Left cardiac atrium (tissue), 4 donors: ENCODE measurements at regions of chr1 and their contacts with region 1.

Region 1: GRCh38 chr1:46132529-46133180 is at the start of gene PIK3R3:
- DNase-seq: peak; percentile 98
- ATAC-seq: peak; percentile 98 to 99
- total RNA-seq, gene PIK3R3: 34.9 to 50.9 TPM

Region 2: GRCh38 chr1:46008585-46008984 is 124.1 kb before region 1 on chr1:
- intact Hi-C with region 1: no loop called
- DNase-seq: no peak
- ATAC-seq: peak; percentile 45 to 66

Region 3: GRCh38 chr1:46043458-46044017 is 89.1 kb before region 1 on chr1:
- intact Hi-C with region 1: loop called in 1 of 2 experiments (anchors 10 kb)
- DNase-seq: no peak
- ATAC-seq: no peak

Region 4: GRCh38 chr1:46070164-46070814 is 62.4 kb before region 1 on chr1:
- intact Hi-C with region 1: loop called in 1 of 2 experiments (anchors 10 kb)
- DNase-seq: no peak
- ATAC-seq: peak; percentile 63 to 78

Region 5: DNA sequence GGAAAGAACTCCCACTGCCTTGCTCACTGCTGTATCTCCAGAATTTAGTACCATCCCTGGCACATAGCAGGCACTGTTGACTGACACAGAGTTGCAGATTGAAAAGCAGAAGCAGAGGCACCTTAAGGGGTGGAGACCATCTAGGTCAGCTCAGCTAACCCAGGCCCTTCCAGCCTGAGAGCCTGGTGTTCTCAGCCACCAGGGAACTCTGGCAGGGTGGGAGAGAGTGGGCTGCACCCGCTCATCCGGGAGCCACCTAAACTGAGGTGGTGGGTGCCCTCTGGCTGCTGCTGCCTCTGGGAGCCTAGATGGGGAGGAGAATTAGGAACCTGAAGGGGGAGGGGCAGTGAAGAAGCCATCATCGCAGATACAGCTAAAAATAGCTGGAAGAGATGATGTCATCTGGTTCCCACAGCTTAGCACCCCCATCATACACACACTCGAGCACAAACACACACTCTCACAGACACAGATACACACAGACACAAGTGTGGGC is 40.8 kb after region 1 on chr1:
- intact Hi-C with region 1: loop called (anchors 5 kb)
- DNase-seq: no peak
- ATAC-seq: peak; percentile 45 to 49

Region 6: DNA sequence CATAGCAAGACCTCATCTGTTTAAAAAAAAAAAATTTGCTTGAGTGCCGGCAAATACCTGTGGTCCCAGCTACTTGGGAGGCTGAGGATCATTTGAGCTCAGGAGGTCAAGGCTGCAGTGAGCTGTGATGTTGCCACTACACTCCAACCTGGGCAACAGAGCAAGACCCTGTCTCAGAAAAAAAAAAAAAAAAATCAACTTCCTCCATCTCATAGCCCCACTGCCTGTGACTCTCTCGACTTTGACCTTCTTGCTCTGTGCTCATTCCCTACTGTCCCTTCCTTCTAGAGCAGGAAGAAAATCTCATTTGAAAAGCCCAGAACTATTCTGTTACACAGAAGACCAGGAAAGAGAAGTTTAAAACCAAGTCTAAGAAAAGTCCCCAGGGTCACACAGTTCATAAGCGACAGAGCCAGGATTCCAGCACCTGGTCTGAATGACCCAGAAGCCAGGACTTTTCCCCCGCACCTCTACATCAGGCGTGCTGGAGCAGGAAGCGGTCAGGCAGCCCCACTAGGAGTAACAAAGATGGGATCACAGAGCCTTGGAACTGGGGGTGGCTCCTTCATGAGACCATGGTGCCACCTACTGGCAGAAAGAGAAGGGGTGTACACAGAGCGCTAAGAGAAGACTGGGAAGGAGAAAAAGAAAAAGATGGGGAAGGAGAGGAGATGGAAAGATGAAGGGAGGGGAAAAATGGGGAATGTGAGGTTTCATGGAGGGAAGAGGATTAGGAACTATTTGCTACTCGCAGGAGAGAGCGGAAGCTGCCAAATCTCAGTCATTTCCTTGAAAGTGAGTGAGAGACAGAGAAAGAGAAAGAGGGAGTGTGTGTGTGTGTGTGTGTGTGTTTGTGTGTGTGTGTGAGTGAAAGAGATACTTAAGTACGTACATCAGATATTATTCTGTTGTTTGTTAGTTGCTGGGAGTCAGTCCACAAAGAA is 46.8 kb after region 1 on chr1:
- intact Hi-C with region 1: loop called (anchors 5 kb)
- DNase-seq: peak; percentile 82
- ATAC-seq: peak; percentile 83 to 87